ENCODE measurements at regions of chr17 and their contacts with region 1.

Region 1: GRCh38 chr17:45910667-45911066 is 16.3 kb downstream of the MAPT start:
- DNase-seq: no peak
- H3K4me3 ChIP-seq: no peak overlapping the region
- H3K27ac ChIP-seq: no peak overlapping the region
- H3K4me1 ChIP-seq: no peaks in the 10 kb centered on the region
- H3K27me3 ChIP-seq: peaks cover 79% of the 10 kb centered on the region
- CTCF ChIP-seq: no peak

Region 2: GRCh38 chr17:46100590-46100989 is 189.9 kb after region 1 on chr17:
- CTCF ChIA-PET with region 1: interaction called, 10 read pairs
- POLR2A ChIA-PET with region 1: no interaction called
- intact Hi-C with region 1: no loop called
- DNase-seq: no peak
- H3K4me3 ChIP-seq: no peak overlapping the region
- H3K27ac ChIP-seq: peak overlapping the region; percentile 81
- H3K4me1 ChIP-seq: peaks cover 30% of the 10 kb centered on the region
- H3K27me3 ChIP-seq: no peaks in the 10 kb centered on the region
- CTCF ChIP-seq: no peak